PC-9 (cell line): ENCODE measurements at regions of chr10 and their contacts with region 1.

Region 1: DNA sequence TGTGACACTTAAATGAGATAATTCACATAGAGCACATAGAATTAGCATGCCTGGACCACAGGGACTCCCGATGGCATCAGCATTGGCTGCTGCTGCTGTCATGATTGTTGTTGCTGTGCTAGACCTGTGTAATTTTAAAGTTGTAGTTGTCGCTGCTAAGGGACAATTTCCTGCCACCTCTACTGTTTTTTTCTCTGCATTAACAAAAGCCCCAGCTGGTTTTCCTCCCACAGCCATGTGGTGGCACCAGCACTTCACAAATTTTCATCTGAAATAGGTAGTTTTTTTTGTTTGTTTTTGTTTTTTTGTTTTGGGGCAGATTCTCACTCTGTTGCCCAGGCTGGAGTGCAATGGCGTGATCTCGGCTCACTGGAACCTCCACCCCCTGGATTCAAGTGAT is 25.4 kb upstream of the PRXL2A start:
- DNase-seq: peak; percentile 58 to 60
- H3K4me3 ChIP-seq: no peak overlapping the region
- H3K27ac ChIP-seq: no peak overlapping the region
- H3K4me1 ChIP-seq: no peaks in the 10 kb centered on the region
- H3K27me3 ChIP-seq: no peaks in the 10 kb centered on the region
- CTCF ChIP-seq: peak; percentile 81

Region 2: DNA sequence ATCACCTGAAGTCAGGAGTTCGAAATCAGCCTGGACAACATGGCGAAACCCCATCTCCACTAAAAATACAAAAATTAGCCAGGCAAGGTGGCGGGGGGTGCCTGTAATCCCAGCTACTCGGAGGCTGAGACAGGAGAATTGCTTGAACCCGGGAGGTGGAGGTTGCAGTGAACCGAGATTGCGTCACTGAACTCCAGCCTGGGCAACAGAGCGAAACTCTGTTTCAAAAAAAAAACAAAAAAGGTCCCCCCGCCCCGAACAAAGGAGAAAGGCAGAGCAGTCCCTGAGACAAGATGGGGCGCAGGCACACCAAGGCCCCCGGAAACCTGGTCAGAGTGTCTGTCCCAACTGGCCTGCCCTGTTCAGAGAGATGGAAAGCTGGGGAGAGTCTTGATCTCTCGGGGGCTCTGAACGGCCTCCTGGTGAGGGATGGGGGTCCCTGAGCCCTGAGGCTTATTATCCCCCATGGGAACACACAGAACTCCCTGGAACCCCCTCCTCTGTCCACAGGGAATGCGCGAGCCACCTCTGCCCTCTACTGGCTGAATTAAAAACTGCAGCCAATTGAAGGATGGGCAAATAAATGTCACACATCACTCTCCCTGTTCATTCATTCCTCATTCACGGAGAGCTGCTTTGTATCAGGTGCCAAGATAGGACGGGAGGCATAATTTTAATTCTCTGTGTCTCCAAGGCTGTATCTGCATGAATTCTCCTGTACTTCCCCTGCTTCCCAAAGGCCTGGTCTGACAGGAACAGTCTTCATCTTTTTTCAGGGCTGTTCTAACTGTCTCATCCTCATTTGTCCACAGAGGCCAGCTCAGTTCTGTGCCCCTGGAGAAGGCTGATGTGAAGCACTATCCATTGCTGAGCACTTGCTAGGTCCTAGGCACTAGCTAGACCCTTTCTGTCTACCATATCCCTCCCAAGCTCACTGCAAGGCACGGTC is 122.4 kb before region 1 on chr10:
- CTCF ChIA-PET with region 1: no interaction called
- POLR2A ChIA-PET with region 1: no interaction called
- intact Hi-C with region 1: loop called (anchors 5 kb)
- DNase-seq: peak in 1 of 2 experiments; percentile 45
- H3K4me3 ChIP-seq: no peak overlapping the region
- H3K27ac ChIP-seq: no peak overlapping the region
- H3K4me1 ChIP-seq: no peaks in the 10 kb centered on the region
- H3K27me3 ChIP-seq: no peaks in the 10 kb centered on the region; the same call in 1 of the 2 replicates
- CTCF ChIP-seq: peak; percentile 98

Region 3: GRCh38 chr10:80504158-80504811 is 121.3 kb after region 1 on chr10:
- CTCF ChIA-PET with region 1: no interaction called
- POLR2A ChIA-PET with region 1: no interaction called
- intact Hi-C with region 1: loop called (anchors 1 kb)
- DNase-seq: peak; percentile 41 to 65
- H3K4me3 ChIP-seq: peak overlapping the region; percentile 8; the same call in 1 of the 2 replicates
- H3K27ac ChIP-seq: peak overlapping the region; percentile 99
- H3K4me1 ChIP-seq: peaks cover 100% of the 10 kb centered on the region
- H3K27me3 ChIP-seq: no peaks in the 10 kb centered on the region
- CTCF ChIP-seq: no peak

Region 4: GRCh38 chr10:80599424-80599847 is 216.4 kb after region 1 on chr10:
- CTCF ChIA-PET with region 1: no interaction called
- POLR2A ChIA-PET with region 1: no interaction called
- intact Hi-C with region 1: loop called (anchors 5 kb)
- DNase-seq: peak in 1 of 2 experiments; percentile 5
- H3K4me3 ChIP-seq: no peak overlapping the region
- H3K27ac ChIP-seq: no peak overlapping the region
- H3K4me1 ChIP-seq: no peaks in the 10 kb centered on the region
- H3K27me3 ChIP-seq: 0 out of 2 replicates have a peak, but pooled peaks cover 4% of the 10 kb centered on the region
- CTCF ChIP-seq: peak; percentile 77

Region 5: DNA sequence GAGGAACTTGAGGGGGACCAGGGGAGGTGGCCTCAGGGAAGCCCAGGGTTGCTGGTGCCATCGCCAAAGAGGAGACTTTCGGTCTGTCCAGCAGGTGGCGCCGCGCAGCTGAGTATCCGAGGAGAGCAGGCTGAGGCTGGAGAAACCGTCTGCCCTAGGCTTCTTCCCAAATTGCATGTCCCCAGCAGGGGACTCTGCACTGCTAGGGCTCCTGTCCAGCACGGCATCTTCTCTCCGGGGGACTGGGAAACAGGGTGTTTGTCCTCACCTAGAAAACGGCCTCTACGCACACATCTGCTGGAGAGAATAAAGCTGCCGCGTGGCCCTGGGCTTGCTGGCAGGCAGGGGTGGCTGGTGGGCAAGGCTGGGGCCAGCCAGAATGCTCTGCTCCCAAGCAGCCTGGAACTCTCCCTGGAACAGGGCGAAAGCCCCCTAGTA is 316.6 kb after region 1 on chr10:
- CTCF ChIA-PET with region 1: no interaction called
- POLR2A ChIA-PET with region 1: no interaction called
- intact Hi-C with region 1: loop called (anchors 5 kb)
- DNase-seq: peak; percentile 49 to 69
- H3K4me3 ChIP-seq: no peak overlapping the region
- H3K27ac ChIP-seq: no peak overlapping the region
- H3K4me1 ChIP-seq: no peaks in the 10 kb centered on the region
- H3K27me3 ChIP-seq: peaks cover 82% of the 10 kb centered on the region
- CTCF ChIP-seq: peak; percentile 90

Region 6: GRCh38 chr10:81018708-81019365 is 635.8 kb after region 1 on chr10:
- CTCF ChIA-PET with region 1: interaction called, 16 read pairs
- POLR2A ChIA-PET with region 1: no interaction called
- intact Hi-C with region 1: loop called (anchors 2 kb)
- DNase-seq: peak in 1 of 2 experiments; percentile 11
- H3K4me3 ChIP-seq: no peak overlapping the region
- H3K27ac ChIP-seq: no peak overlapping the region
- H3K4me1 ChIP-seq: no peaks in the 10 kb centered on the region
- H3K27me3 ChIP-seq: no peaks in the 10 kb centered on the region
- CTCF ChIP-seq: peak; percentile 81